BJ (cell line): ENCODE measurements at regions of chr12 and their contacts with region 1.

Region 1: GRCh38 chr12:50074936-50075807 is 10.0 kb upstream of the SMARCD1 start:
- DNase-seq: no peak
- H3K4me3 ChIP-seq: no peak overlapping the region
- H3K27me3 ChIP-seq: no peaks in the 10 kb centered on the region
- CTCF ChIP-seq: peak; percentile 91

Region 2: GRCh38 chr12:49983892-49984291 is 91.3 kb before region 1 on chr12:
- CTCF ChIA-PET with region 1: interaction called, 19 read pairs
- POLR2A ChIA-PET with region 1: no interaction called
- DNase-seq: no peak
- H3K4me3 ChIP-seq: no peak overlapping the region
- H3K27me3 ChIP-seq: no peaks in the 10 kb centered on the region
- CTCF ChIP-seq: no peak

Region 3: DNA sequence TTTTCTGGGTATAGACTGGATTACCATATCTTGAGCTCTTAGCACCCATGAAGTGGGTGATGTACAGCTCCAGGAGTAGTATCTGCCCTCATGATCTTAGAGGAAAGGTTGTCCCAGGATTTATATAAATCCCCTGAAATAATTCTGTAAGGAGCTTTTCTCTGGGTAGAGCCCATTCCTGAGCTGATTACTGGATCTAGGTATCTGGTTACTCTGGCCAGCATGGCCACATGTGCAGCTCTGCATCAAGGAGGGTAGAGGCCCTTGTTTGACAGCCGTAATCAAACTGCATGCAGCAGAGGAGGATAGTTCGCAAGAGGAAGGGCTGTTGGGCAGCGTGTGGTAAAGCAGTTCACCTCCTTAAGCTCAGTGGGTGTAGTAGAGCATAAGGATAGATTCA is 45.3 kb after region 1 on chr12:
- CTCF ChIA-PET with region 1: no interaction called
- POLR2A ChIA-PET with region 1: no interaction called
- DNase-seq: no peak
- H3K4me3 ChIP-seq: no peak overlapping the region
- H3K27me3 ChIP-seq: no peaks in the 10 kb centered on the region
- CTCF ChIP-seq: no peak

Region 4: GRCh38 chr12:50351120-50352043 is 276.2 kb after region 1 on chr12:
- CTCF ChIA-PET with region 1: no interaction called
- POLR2A ChIA-PET with region 1: no interaction called
- DNase-seq: no peak
- H3K4me3 ChIP-seq: no peak overlapping the region
- H3K27me3 ChIP-seq: peaks cover 1% of the 10 kb centered on the region; the same call in 1 of the 2 replicates
- CTCF ChIP-seq: no peak

Region 5: DNA sequence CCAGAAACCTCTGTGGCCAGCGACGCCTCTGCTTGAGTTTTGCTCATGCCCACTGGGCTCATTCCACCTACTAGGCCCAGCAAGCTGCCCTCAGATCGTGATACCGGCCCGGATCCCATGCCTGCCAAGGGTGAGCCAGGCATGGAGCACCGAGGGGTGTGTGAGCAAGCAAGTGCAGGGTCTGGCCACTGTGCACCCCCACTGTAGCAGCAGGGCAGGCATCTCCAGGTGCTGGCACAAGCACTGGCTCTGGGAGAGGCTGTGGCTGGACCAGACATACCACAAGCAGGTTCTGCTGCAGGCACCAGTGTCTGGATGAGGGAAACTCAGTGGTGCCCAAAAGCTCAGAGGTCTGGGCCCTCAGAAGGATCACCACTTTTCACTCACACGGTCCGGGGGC is 300.6 kb after region 1 on chr12:
- CTCF ChIA-PET with region 1: no interaction called
- POLR2A ChIA-PET with region 1: no interaction called
- DNase-seq: no peak
- H3K4me3 ChIP-seq: no peak overlapping the region
- H3K27me3 ChIP-seq: no peaks in the 10 kb centered on the region
- CTCF ChIP-seq: no peak